ENCODE measurements at regions of chr4 and their contacts with region 1.

Region 1: GRCh38 chr4:51870441-51871188 is 27.7 kb downstream of the DCUN1D4 start:
- DNase-seq: no peak
- H3K4me3 Mint-ChIP-seq: no peak overlapping the region
- H3K27ac Mint-ChIP-seq: no peak overlapping the region
- H3K4me1 Mint-ChIP-seq: no peaks in the 10 kb centered on the region
- H3K27me3 Mint-ChIP-seq: no peaks in the 10 kb centered on the region

Region 2: DNA sequence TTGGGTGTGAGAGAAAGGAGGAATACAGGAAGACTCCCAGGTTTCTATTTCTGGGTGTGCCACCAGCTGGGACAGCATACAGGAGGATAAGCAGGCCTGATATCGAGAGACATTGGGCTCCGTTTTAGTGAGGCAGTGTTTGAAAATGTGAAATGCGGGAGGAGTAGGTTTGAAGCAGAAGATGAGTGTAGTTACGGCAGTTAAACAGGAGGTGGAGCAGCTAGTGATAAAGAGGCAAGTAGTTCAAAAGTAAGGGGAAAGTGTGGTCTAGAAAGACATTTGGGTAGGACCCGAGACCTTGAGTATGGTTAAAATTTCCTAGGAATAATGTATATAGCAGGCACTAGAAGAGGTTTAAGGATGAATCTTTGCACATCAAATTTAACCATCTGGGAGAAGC is 14.7 kb after region 1 on chr4:
- CTCF ChIA-PET with region 1: no interaction called
- intact Hi-C with region 1: no loop called
- DNase-seq: no peak
- H3K4me3 Mint-ChIP-seq: no peak overlapping the region
- H3K27ac Mint-ChIP-seq: no peak overlapping the region
- H3K4me1 Mint-ChIP-seq: no peaks in the 10 kb centered on the region
- H3K27me3 Mint-ChIP-seq: no peaks in the 10 kb centered on the region

Region 3: GRCh38 chr4:51923343-51923742 is 52.7 kb after region 1 on chr4:
- CTCF ChIA-PET with region 1: no interaction called
- intact Hi-C with region 1: loop called (anchors 10 kb)
- DNase-seq: no peak
- H3K4me3 Mint-ChIP-seq: no peak overlapping the region
- H3K27ac Mint-ChIP-seq: no peak overlapping the region
- H3K4me1 Mint-ChIP-seq: no peaks in the 10 kb centered on the region
- H3K27me3 Mint-ChIP-seq: no peaks in the 10 kb centered on the region